ENCODE measurements at regions of chr3 and their contacts with region 1.

Region 1: DNA sequence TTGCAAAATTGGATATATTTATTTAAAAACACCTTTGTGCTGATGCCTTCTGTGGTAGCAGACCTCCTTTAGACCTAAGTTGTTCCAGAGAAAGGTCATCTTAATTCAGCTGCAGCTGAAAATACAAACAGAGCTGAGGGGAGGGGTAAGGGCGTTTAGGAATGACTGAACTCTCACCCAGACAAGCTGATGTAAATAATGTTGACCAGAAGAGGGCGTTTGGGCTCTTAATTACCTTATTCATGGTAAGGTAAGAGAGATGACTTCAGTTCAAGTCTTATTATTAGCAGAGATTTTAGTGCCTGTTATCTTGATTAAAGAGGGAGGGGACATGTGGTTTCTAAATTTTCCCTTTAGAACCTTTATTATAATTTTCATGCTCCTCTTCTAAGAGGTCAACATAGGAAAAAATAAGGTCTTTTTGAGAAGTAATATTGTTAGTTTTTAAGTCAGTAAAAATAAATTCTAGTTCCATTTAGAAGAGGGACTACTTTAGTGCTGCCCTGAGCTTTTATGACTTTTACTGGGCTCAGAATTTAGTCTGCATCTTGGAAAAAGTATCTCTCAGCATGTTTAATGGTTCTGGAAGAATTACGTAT is 46.3 kb downstream of the GPR171 start:
- DNase-seq: no peak
- H3K4me3 ChIP-seq: no peak overlapping the region
- H3K27ac ChIP-seq: no peak overlapping the region
- H3K4me1 ChIP-seq: no peaks in the 10 kb centered on the region
- H3K27me3 ChIP-seq: no peaks in the 10 kb centered on the region
- CTCF ChIP-seq: peak in 2 of 3 experiments; percentile 20 to 31
- POLR2A ChIP-seq: no peak

Region 2: GRCh38 chr3:150798122-150798626 is 358.5 kb before region 1 on chr3:
- intact Hi-C with region 1: loop called (anchors 10 kb)
- DNase-seq: peak; percentile 30
- H3K4me3 ChIP-seq: no peak overlapping the region
- H3K27ac ChIP-seq: no peak overlapping the region
- H3K4me1 ChIP-seq: peaks cover 4% of the 10 kb centered on the region
- H3K27me3 ChIP-seq: no peaks in the 10 kb centered on the region
- CTCF ChIP-seq: no peak
- POLR2A ChIP-seq: no peak

Region 3: GRCh38 chr3:151107693-151108092 is 49.0 kb before region 1 on chr3:
- intact Hi-C with region 1: no loop called
- DNase-seq: no peak
- H3K4me3 ChIP-seq: no peak overlapping the region
- H3K27ac ChIP-seq: no peak overlapping the region
- H3K4me1 ChIP-seq: no peaks in the 10 kb centered on the region
- H3K27me3 ChIP-seq: no peaks in the 10 kb centered on the region
- CTCF ChIP-seq: no peak
- POLR2A ChIP-seq: no peak

Region 4: GRCh38 chr3:151183265-151183671 is 26.6 kb after region 1 on chr3:
- intact Hi-C with region 1: loop called (anchors 1 kb)
- DNase-seq: no peak
- H3K4me3 ChIP-seq: no peak overlapping the region
- H3K27ac ChIP-seq: no peak overlapping the region
- H3K4me1 ChIP-seq: no peaks in the 10 kb centered on the region
- H3K27me3 ChIP-seq: no peaks in the 10 kb centered on the region
- CTCF ChIP-seq: no peak
- POLR2A ChIP-seq: no peak

Region 5: DNA sequence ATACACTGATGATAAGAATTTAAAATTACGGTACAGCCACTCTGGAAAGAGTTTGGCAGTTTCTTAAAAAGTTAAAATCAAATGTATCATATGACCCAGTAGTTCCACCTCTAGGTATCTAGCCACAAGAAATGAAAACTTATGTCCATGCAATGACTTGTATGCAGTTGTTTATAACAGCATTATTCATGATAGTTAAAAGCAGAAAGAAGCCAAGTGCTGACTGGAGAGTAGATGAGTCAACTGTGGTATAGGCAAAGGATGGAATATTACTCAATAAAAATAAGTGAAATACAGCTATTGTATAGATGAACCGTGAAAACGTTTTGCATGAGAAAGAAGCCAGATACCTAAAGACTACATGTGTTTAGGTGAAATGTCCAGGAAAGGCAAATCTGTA is 145.1 kb after region 1 on chr3:
- intact Hi-C with region 1: no loop called
- DNase-seq: no peak
- H3K4me3 ChIP-seq: no peak overlapping the region
- H3K27ac ChIP-seq: no peak overlapping the region
- H3K4me1 ChIP-seq: no peaks in the 10 kb centered on the region
- H3K27me3 ChIP-seq: no peaks in the 10 kb centered on the region
- CTCF ChIP-seq: no peak
- POLR2A ChIP-seq: no peak

Measured in testis (tissue), 5 donors.